ENCODE measurements at regions of chr1 and their contacts with region 1.

Region 1: DNA sequence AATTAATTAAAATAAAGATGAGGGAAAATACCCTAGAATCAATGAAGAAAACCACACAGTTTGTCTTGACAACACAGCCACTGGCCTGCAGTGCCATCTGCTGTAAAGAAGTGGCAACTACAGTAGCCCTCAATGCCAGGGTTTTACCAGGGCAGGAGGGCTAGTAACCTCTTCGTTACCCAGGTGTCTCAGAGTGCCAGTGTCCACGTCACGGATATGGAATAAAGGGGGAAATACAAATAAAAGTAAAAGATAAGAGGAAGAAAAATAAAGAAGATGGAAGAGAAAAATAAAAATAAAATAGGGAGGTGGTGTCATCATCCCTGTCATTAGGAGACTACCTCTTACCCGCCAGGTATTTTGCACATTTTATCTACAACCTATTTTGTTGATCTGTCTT is 14.2 kb upstream of the SLC44A3 start:
- DNase-seq: no peak
- H3K4me3 ChIP-seq: no peak overlapping the region
- H3K27ac ChIP-seq: no peak overlapping the region
- H3K27me3 ChIP-seq: no peaks in the 10 kb centered on the region
- CTCF ChIP-seq: peak; percentile 95

Region 2: GRCh38 chr1:94463765-94464330 is 342.1 kb before region 1 on chr1:
- CTCF ChIA-PET with region 1: interaction called, 10 read pairs
- POLR2A ChIA-PET with region 1: no interaction called
- DNase-seq: peak; percentile 21
- H3K4me3 ChIP-seq: no peak overlapping the region
- H3K27ac ChIP-seq: no peak overlapping the region
- H3K27me3 ChIP-seq: no peaks in the 10 kb centered on the region
- CTCF ChIP-seq: peak; percentile 71

Region 3: DNA sequence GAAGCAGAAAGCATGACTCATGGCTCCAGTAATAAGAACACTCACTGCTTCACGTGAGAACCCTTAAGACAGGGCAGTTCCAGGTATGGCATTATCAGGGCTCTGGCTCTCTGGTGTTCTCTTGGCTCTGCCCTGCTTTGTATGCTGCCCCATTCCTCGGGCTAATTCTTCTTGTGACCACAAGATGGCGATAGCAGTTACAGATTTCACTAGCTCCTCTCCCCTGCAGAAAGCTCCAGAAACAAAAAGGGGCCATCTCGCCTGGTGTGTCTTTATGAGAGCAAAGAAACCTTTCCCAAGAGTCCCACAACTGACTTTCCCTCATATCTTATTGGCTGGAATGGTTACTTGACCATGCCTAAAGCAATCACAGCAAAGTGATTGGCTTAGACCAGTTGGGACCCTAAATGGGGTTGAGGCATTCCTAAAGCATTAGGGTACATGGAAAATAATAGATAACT is 324.4 kb before region 1 on chr1:
- CTCF ChIA-PET with region 1: interaction called, 101 read pairs
- POLR2A ChIA-PET with region 1: interaction called, 3 read pairs
- DNase-seq: peak; percentile 51
- H3K4me3 ChIP-seq: no peak overlapping the region
- H3K27ac ChIP-seq: no peak overlapping the region
- H3K27me3 ChIP-seq: no peaks in the 10 kb centered on the region
- CTCF ChIP-seq: peak; percentile 89

Region 4: DNA sequence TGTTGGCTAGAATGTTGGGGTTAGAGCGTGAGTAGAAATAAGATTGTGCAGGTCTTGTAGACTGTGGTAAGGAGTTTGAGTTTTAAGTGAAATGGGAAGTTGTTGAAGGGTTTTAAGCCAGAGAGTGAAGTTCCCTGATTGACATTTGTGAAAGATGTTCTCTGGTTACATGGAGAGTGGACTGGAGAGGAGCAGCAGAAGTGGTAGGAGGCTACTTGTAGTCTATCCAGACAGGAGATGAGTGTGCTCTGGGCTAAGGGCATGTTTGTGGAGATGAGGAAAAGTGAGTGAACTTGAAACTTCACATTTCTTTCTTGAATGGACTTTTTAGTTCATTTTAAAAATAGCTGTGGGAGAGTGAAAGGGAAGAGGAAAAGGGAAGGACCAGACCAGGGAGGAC is 301.3 kb before region 1 on chr1:
- CTCF ChIA-PET with region 1: interaction called, 24 read pairs
- POLR2A ChIA-PET with region 1: no interaction called
- DNase-seq: no peak
- H3K4me3 ChIP-seq: no peak overlapping the region
- H3K27ac ChIP-seq: no peak overlapping the region
- H3K27me3 ChIP-seq: no peaks in the 10 kb centered on the region
- CTCF ChIP-seq: no peak

Region 5: GRCh38 chr1:94522304-94522703 is 283.6 kb before region 1 on chr1:
- CTCF ChIA-PET with region 1: interaction called, 135 read pairs
- POLR2A ChIA-PET with region 1: interaction called, 6 read pairs
- DNase-seq: no peak
- H3K4me3 ChIP-seq: no peak overlapping the region
- H3K27ac ChIP-seq: no peak overlapping the region
- H3K27me3 ChIP-seq: no peaks in the 10 kb centered on the region
- CTCF ChIP-seq: peak; percentile 62

Region 6: GRCh38 chr1:94541175-94542087 is 264.5 kb before region 1 on chr1 and contains the start of gene F3:
- CTCF ChIA-PET with region 1: interaction called, 15 read pairs
- POLR2A ChIA-PET with region 1: interaction called, 15 read pairs
- DNase-seq: no peak
- H3K4me3 ChIP-seq: peak within 1 kb of the TSS; percentile 79
- H3K27ac ChIP-seq: peak within 1 kb of the TSS; percentile 95
- H3K27me3 ChIP-seq: no peaks in the 10 kb centered on the region
- CTCF ChIP-seq: peak; percentile 25; the same call in 1 of the 2 replicates
- polyA plus RNA-seq, gene F3: 319 and 330 TPM in 2 replicates

Region 7: GRCh38 chr1:94854458-94855306 is 48.8 kb after region 1 on chr1:
- CTCF ChIA-PET with region 1: interaction called, 15 read pairs
- POLR2A ChIA-PET with region 1: no interaction called
- DNase-seq: peak; percentile 83
- H3K4me3 ChIP-seq: peak overlapping the region; percentile 58
- H3K27ac ChIP-seq: peak overlapping the region; percentile 69
- H3K27me3 ChIP-seq: no peaks in the 10 kb centered on the region
- CTCF ChIP-seq: peak; percentile 96

Measured in AG04450 (cell line).